ENCODE measurements at regions of chr5 and their contacts with region 1.

Region 1: DNA sequence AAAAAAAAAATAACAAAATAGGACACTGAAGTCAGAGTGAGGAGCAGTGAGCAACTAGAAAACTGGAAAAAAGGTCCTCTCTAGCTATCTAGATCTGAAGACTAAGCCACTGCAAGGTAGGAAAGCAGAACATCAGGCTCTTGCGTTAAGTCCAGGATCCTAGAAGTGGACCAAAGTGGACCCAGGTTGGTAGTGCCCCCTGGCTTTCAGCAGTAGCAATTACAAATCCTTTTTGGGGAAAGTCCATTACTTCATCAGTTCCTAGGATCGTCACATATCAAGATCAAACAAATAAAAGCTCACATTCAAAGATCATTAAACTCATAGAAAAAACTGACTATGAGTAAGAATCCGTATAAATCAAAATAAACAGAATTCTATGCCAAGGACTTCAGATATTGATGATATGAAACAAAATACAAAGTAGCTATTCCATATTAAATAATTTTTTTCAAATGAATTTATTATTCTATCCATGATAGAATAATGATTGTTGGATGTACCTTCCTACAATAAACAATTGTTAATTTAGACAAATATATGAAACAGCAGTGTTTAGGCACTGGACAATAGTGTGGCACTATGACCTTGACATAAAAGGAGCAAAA is 6.5 kb upstream of the RICTOR start:
- DNase-seq: no peak
- ATAC-seq: peak; percentile 78

Region 2: GRCh38 chr5:38997591-38997990 is 83.1 kb before region 1 on chr5:
- intact Hi-C with region 1: loop called (anchors 5 kb)
- DNase-seq: no peak
- ATAC-seq: peak; percentile 50

Region 3: DNA sequence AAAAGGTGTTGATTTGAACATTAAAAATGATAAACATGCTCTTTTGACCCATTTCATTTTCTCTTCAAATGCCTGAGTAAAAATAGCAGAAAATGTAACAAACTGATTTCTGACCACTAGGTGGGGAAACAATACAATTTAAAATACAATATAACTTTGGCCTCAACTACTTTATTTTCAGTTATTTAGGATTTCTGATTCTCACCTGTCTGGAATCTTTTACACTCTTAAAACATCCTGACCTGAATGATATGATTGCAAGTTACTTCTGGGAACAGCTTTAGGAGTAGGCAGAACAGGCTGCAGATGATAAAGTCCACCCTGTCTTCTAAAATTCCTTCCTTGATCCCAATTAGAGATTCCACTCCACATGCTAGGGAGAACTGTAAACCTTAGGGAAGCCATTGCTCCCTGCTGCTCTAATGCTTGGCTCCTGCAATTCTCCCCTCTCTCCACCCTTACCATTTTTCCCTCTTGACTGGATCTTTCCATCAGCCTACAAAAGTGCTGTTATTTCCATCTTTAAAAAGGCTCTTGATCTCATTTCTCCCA is 68.4 kb after region 1 on chr5:
- intact Hi-C with region 1: no loop called
- DNase-seq: no peak
- ATAC-seq: no peak